ENCODE measurements at regions of chr12 and their contacts with region 1.

Region 1: DNA sequence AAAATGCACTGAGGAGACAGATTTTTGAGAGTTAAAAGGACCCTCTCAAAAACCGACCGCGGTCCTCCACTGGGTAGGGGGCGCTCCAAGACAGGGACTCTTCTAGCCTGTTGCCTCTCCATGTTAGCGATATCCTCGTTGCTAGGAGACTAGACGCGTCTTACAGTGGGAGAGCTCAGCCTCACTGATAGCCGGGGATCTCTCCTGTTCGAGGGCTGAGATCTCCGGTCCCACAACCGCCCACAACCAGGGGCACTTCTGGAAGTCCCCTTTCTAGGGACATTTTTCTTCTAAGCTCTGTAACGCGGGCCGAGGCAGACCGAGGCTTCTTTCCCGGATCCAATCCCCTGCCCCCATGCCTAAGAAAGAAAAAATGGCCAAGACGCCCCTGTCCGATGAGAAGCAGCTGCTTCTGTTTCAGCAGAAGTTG is 21.3 kb downstream of the FKBP11 start:
- DNase-seq: peak; percentile 20
- ATAC-seq: peak; percentile 97
- H3K4me3 ChIP-seq: peak overlapping the region; percentile 40; the same call in 1 of the 2 replicates
- H3K27ac ChIP-seq: no peak overlapping the region
- H3K4me1 ChIP-seq: peaks cover 8% of the 10 kb centered on the region; the same call in 1 of the 2 replicates
- H3K27me3 ChIP-seq: no peaks in the 10 kb centered on the region; a peak in 1 of 4 replicates
- CTCF ChIP-seq: peak; percentile 66 to 81 (median 75)
- EP300 ChIP-seq: no peak
- POLR2A ChIP-seq: no peak
- RAD21 ChIP-seq: peak; percentile 41

Region 2: DNA sequence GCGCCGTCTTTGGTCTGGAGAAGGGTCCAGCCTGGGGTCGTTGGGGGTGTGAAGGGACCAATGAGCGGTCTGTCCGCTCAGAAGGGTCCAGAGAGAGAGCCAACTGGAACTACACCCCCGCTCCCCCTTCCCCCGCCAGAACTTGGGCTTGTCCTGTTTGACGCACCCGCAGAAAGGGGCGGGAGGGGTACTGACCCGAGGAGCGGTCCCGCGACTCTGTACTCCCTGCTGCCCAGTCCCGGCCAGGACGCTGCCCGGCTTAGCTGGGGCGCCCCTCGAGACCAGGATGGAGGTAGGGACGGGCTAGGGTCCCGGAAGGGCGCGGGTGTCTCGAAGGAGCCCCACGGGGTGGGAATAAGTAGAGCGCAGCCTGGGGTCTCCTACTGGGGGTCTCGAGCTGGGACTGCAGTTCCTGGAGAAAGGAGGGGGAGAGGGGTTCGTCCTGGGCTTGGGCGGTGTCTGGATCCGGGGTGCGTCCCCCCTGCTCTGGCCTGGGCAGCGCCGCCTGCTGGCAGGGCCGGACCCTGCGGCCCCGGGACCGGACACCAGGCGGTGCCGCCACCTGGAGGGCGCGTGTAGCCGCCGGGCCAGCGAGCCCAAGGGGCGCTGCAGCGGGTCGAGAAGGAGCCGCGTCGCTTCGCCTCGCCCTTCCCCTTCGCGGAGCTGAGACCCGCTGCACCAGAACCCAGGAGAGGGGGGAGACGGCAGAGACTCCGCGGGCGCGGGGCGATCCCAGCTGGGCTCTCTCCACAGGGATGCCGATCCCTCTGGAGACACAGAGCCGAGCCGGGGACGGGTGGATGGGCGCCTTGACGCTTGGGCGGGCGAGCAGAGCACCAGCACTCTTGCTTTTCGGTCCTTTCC is 89.5 kb before region 1 on chr12:
- CTCF ChIA-PET with region 1: interaction called, 11 read pairs
- POLR2A ChIA-PET with region 1: no interaction called
- RAD21 ChIA-PET with region 1: no interaction called
- SMC1A ChIA-PET with region 1: no interaction called
- in situ Hi-C with region 1: no loop called
- intact Hi-C with region 1: no loop called
- DNase-seq: peak; percentile 31
- ATAC-seq: peak; percentile 92
- H3K4me3 ChIP-seq: peak overlapping the region; percentile 66
- H3K27ac ChIP-seq: no peak overlapping the region
- H3K4me1 ChIP-seq: peaks cover 7% of the 10 kb centered on the region
- H3K27me3 ChIP-seq: peaks cover 1 to 3% of the 10 kb centered on the region in 2 experiments; a peak in 3 of 4 replicates
- CTCF ChIP-seq: peak; percentile 96 to 100 (median 100); a peak in 5 of 6 replicates
- EP300 ChIP-seq: no peak
- POLR2A ChIP-seq: peak; percentile 75
- RAD21 ChIP-seq: peak; percentile 27

Region 3: DNA sequence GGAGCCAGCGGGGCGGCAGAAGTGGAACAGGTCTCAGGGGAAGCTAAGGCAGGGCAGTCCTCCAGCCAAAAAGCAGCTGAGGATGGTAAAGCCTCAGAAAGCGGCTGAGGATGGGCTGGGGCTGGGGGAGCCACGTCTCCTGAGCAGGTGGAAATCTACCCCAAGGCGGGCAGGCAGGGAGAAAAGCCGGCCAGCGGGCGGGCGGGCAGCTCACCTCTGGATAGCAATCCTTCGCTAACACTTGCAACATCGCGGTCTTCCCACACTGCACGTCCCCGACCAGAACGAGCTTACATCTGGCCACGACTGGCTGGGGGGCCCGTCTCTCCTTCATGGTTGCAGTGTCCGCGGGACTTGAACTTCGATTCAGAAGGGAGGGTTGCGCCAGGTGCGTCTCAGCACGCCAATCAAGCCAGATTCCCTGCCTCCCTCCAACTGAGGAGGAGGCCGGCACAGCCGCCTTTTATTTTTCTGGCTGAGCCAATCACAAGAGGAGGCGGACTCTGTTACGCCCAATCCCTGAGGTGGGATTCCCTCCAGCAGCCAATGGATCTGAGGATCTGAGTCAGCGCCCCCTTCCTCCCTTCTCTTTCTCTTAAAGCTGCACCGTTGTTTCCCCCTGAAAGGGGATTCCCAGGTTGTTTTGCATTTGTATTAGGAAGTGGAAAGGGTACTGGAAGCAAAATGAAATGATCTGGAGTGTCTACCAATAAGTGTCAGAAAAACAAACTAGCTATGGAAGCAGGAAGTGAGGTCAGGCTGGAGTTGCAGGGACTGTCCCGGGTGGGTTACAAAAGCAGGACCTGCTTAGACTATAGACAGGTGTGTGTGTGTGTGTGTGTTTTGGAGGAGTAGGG is 38.3 kb before region 1 on chr12 and contains the start of gene RND1:
- CTCF ChIA-PET with region 1: interaction called, 21 read pairs
- POLR2A ChIA-PET with region 1: interaction called, 36 read pairs
- RAD21 ChIA-PET with region 1: interaction called, 12 read pairs
- SMC1A ChIA-PET with region 1: interaction called, 17 read pairs
- in situ Hi-C with region 1: no loop called
- intact Hi-C with region 1: no loop called
- DNase-seq: peak; percentile 89
- ATAC-seq: peak; percentile 95
- H3K4me3 ChIP-seq: peak within 1 kb of the TSS; percentile 79
- H3K27ac ChIP-seq: peak within 1 kb of the TSS; percentile 49
- H3K4me1 ChIP-seq: peaks cover 12% of the 10 kb centered on the region
- H3K27me3 ChIP-seq: no peaks in the 10 kb centered on the region
- CTCF ChIP-seq: 0 out of 6 replicates have a peak, but pooled peaks of 1 of the 3 experiments have one; percentile 5
- EP300 ChIP-seq: no peak
- POLR2A ChIP-seq: peak; percentile 99
- RAD21 ChIP-seq: no peak
- polyA plus RNA-seq, gene RND1: 0.24 to 0.42 TPM

Region 4: GRCh38 chr12:48917857-48918537 is 14.0 kb after region 1 on chr12:
- CTCF ChIA-PET with region 1: interaction called, 22 read pairs
- POLR2A ChIA-PET with region 1: interaction called, 3 read pairs
- RAD21 ChIA-PET with region 1: no interaction called
- SMC1A ChIA-PET with region 1: interaction called, 5 read pairs
- in situ Hi-C with region 1: no loop called
- intact Hi-C with region 1: no loop called
- DNase-seq: no peak
- ATAC-seq: no peak
- H3K4me3 ChIP-seq: no peak overlapping the region
- H3K27ac ChIP-seq: no peak overlapping the region
- H3K4me1 ChIP-seq: peaks cover 7% of the 10 kb centered on the region
- H3K27me3 ChIP-seq: no peaks in the 10 kb centered on the region
- CTCF ChIP-seq: no peak
- EP300 ChIP-seq: no peak
- POLR2A ChIP-seq: no peak
- RAD21 ChIP-seq: no peak

Region 5: DNA sequence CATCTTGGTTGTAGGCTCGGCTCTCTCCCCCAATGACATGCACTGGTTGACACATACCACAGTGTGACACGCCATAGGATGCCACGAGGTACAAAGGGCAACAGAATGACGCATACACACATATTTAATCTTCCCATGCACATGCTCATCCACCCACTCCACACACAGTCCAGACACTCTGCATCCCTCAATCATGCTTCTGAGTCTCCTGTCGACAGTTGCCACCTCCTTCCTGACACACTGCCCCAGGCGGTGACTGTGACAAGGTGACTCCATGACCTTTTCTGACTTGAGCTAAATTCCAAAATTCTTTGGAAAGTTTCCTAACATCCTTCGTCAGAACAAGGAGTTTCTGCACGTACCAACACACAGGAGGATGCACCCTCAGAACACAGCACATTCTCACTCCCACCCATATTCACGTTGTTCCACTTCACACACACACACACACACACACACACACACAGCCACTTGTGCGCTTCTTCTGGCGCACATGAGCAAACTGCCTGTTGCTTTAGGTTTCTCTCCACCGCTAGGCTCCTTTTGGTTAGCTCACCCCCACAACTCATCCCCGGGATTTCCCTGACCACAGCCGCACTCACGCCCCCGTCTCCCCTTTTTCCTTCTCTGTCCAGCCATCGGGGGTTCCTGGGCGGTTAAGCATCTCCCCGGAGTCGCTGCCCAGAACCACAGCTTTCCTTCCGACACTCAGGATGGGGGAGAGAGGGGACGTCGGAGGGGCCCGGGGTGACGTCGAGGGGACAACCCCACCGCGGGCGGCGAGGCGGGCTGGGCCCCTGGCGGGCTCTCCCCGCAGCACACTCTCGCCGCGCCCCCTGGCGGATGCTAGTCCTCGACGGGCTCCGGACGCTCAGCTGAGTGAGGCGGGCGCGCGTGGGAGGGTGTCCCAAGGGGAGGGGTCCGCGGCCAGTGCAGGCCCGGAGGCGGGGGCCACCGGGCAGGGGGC is 73.6 kb after region 1 on chr12:
- CTCF ChIA-PET with region 1: interaction called, 27 read pairs
- POLR2A ChIA-PET with region 1: no interaction called
- RAD21 ChIA-PET with region 1: no interaction called
- SMC1A ChIA-PET with region 1: interaction called, 3 read pairs
- in situ Hi-C with region 1: no loop called
- intact Hi-C with region 1: no loop called
- DNase-seq: no peak
- ATAC-seq: peak; percentile 84
- H3K4me3 ChIP-seq: no peak overlapping the region; the same call in 1 of the 2 replicates
- H3K27ac ChIP-seq: no peak overlapping the region
- H3K4me1 ChIP-seq: peaks cover 35% of the 10 kb centered on the region
- H3K27me3 ChIP-seq: peaks cover 37 to 44% of the 10 kb centered on the region in 2 experiments
- CTCF ChIP-seq: peak; percentile 61 to 82 (median 70); a peak in 5 of 6 replicates
- EP300 ChIP-seq: no peak; a peak in 1 of 4 replicates
- POLR2A ChIP-seq: no peak
- RAD21 ChIP-seq: peak; percentile 50